Naive thymus-derived CD4-positive, alpha-beta T cell (primary cell): ENCODE measurements at regions of chr16 and their contacts with region 1.

Region 1: DNA sequence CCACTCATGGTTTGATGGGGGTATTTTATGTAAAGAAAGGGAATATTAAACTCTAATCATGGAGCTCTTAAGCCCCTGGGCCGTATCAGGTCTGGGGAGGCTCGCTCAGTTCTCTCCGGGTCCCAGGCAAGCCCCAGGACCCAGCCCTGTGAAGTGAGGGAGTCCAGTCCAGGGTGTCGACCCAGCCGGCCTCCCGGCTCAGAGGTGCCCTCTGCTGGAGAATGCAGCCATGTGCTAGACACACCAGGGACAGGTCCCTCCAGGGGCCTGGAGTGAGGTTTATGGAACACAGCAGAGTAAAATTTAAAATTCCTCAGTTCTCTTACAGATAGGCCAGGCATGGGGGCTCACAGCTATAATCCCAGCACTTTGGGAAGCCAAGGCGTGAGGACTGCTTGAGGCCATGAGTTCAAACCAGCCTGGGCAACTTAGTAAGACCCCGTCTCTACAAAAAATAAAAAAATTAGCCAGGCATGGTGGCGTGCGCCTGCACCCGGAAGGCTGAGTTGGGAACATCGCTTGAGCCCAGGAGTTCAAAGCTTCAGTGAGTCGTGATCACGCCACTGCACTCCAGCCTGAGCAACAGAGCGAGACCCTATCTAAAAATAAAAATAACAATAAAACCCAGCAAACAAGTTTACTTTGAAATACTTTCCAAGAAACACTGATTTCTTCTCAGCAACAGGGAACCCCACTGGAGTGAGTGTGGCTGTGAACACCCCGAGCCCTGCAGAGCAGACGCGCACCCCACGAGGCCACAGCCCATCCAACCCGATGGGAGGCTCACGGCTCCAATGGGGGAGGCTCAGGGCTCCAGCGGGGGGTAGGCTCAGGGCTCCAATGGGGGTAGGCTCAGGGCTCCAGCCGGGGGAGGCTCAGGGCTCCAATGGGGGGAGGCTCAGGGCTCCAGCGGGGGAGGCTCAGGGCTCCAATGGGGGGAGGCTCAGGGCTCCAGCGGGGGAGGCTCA is 72.2 kb downstream of the ZNF778 start:
- DNase-seq: peak; percentile 43 to 71 (median 60)
- ATAC-seq: peak; percentile 89
- H3K4me3 ChIP-seq: no peak overlapping the region
- H3K4me3 Mint-ChIP-seq: no peak overlapping the region
- H3K27ac ChIP-seq: no peak overlapping the region
- H3K27ac Mint-ChIP-seq: peak overlapping the region in 8 of 9 donors; percentile 20 to 87 (median 55)
- H3K4me1 ChIP-seq: no peaks in the 10 kb centered on the region
- H3K4me1 Mint-ChIP-seq: peaks cover 6 to 19% (median 13%) of the 10 kb centered on the region in 7 donors
- H3K27me3 ChIP-seq: no peaks in the 10 kb centered on the region
- H3K27me3 Mint-ChIP-seq: no peaks in the 10 kb centered on the region

Region 2: GRCh38 chr16:89241187-89242007 is 48.3 kb before region 1 on chr16:
- CTCF ChIA-PET with region 1: interaction called, 10 read pairs
- POLR2A ChIA-PET with region 1: no interaction called
- intact Hi-C with region 1: loop called (anchors 1 to 2 kb)
- DNase-seq: peak; percentile 75 to 95 (median 93)
- ATAC-seq: peak; percentile 86
- H3K4me3 ChIP-seq: peak overlapping the region; percentile 68
- H3K4me3 Mint-ChIP-seq: peak overlapping the region; percentile 83 to 100 (median 96)
- H3K27ac ChIP-seq: peak overlapping the region; percentile 91
- H3K27ac Mint-ChIP-seq: peak overlapping the region; percentile 94 to 100 (median 99)
- H3K4me1 ChIP-seq: peaks cover 5 to 6% of the 10 kb centered on the region in 2 donors
- H3K4me1 Mint-ChIP-seq: peaks cover 0 to 31% (median 18%) of the 10 kb centered on the region in 7 donors
- H3K27me3 ChIP-seq: no peaks in the 10 kb centered on the region
- H3K27me3 Mint-ChIP-seq: no peaks in the 10 kb centered on the region

Region 3: DNA sequence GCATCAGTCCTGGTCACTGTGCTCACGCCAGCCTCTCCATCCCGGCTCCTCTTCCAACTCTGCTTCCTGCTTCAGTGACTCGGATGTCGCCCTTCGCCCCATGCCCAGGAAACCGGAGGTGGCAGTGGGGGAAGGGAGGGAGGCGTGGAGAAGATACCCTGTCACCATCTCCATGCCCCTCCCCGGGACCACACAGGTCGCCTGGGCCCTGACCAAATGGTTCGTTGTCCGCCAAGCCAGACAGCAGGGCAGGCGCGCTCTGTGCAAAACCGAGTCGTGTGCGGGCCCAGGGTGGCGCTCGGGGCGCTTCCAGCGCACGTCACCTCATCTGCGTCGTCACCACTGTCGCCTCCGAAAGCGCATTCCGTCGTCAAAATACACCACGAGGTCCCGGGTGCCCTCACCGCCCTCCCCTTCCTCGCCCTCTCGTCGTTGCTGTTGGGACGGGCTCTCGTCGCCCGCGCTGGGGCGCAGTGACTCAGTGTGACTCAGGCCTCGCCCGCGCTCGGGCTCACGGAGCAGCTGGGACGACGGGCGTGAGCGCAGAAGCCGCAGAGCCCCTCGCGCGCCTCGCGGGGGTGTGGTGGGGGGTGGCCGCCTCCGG is 33.0 kb before region 1 on chr16:
- CTCF ChIA-PET with region 1: no interaction called
- POLR2A ChIA-PET with region 1: no interaction called
- intact Hi-C with region 1: loop called in 1 of 2 experiments (anchors 2 kb)
- DNase-seq: peak; percentile 56 to 88 (median 71)
- ATAC-seq: peak; percentile 96
- H3K4me3 ChIP-seq: peak overlapping the region; percentile 52
- H3K4me3 Mint-ChIP-seq: peak overlapping the region; percentile 63 to 85 (median 76)
- H3K27ac ChIP-seq: peak overlapping the region; percentile 19
- H3K27ac Mint-ChIP-seq: peak overlapping the region in 6 of 9 donors; percentile 48 to 84 (median 80)
- H3K4me1 ChIP-seq: peaks cover 10 to 13% of the 10 kb centered on the region in 2 donors
- H3K4me1 Mint-ChIP-seq: peaks cover 14 to 26% (median 21%) of the 10 kb centered on the region in 7 donors
- H3K27me3 ChIP-seq: peaks cover 4% of the 10 kb centered on the region in 2 donors
- H3K27me3 Mint-ChIP-seq: peaks cover 14 to 37% (median 15%) of the 10 kb centered on the region in 5 donors

Region 4: GRCh38 chr16:89678258-89678657 is 388.5 kb after region 1 on chr16:
- CTCF ChIA-PET with region 1: no interaction called
- POLR2A ChIA-PET with region 1: no interaction called
- intact Hi-C with region 1: no loop called
- DNase-seq: no peak
- ATAC-seq: no peak
- H3K4me3 ChIP-seq: no peak overlapping the region
- H3K4me3 Mint-ChIP-seq: no peak overlapping the region
- H3K27ac ChIP-seq: no peak overlapping the region
- H3K27ac Mint-ChIP-seq: no peak overlapping the region
- H3K4me1 ChIP-seq: no peaks in the 10 kb centered on the region
- H3K4me1 Mint-ChIP-seq: no peaks in the 10 kb centered on the region
- H3K27me3 ChIP-seq: no peaks in the 10 kb centered on the region
- H3K27me3 Mint-ChIP-seq: no peaks in the 10 kb centered on the region